GM18951 (cell line): ENCODE measurements at regions of chr4 and their contacts with region 1.

Region 1: GRCh38 chr4:122577808-122578781 is 42.8 kb downstream of the IL21 start:
- POLR2A ChIP-seq: no peak

Region 2: DNA sequence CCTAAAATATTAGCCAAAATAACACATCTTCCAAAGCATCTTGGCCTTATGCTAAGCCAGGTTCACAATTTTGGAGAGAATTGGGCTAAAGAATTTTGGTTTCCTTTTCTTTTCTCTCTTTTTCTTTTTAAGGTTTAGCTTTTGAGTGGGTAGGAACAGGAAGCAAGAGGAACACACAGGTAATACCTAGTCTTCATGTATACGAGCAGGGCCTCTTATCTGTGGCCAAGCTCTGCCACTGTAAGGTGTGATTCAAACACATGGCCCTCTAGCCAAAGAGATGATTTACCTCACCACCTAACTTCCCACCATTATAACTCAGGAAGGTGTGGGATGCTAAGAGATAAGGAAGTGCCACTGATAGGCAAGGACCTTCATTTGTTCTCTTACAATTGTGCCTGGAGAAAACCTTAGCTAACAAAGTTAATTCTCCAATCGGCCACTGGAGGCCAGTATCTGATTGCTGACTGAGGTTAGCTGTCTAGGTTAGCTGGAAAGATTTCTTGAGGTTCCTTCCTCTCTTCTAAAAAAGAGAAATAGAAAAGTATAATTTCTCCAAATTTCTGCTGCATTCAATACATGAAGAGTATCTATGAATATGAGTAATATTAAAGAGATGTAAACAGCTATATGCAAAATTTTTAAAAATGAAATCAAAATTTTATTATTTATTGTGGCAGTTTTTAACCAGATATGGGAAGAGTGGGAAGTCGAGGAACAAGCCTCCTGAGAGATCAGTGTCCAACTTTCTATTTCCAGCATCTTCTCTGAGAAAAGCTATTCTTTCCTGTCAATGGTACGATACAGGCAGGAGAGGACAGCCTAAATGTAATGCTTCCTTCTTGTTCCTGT is 677.7 kb before region 1 on chr4:
- in situ Hi-C with region 1: loop called (anchors 25 kb)
- POLR2A ChIP-seq: no peak

Region 3: GRCh38 chr4:122666527-122667245 is 88.6 kb after region 1 on chr4:
- in situ Hi-C with region 1: no loop called
- POLR2A ChIP-seq: no peak